ENCODE measurements at regions of chr19 and their contacts with region 1.

Region 1: DNA sequence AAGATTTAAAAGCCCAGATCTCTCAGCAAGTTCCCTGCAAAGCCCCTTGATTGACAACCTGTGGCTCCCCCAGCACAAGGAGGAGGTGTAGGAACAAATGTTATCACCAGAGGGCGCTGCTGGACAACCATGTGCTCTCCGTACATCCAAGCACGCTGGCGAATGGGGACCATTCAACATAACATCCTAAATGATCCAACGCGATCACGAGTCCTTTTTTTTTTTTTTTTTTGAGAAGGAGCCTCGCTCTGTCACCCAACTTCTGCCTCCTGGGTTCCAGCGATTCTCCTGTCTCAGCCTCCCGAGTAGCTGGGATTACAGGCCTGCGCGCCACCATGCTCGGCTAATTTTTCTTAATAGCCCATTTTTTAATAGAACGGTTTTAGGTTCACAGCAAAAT is 52.0 kb downstream of the NWD1 start:
- DNase-seq: peak; percentile 48
- ATAC-seq: peak; percentile 75
- H3K4me3 Mint-ChIP-seq: no peak overlapping the region
- H3K27ac Mint-ChIP-seq: no peak overlapping the region
- H3K4me1 Mint-ChIP-seq: peaks cover 1% of the 10 kb centered on the region
- H3K27me3 Mint-ChIP-seq: peaks cover 3% of the 10 kb centered on the region
- CTCF ChIP-seq: no peak

Region 2: DNA sequence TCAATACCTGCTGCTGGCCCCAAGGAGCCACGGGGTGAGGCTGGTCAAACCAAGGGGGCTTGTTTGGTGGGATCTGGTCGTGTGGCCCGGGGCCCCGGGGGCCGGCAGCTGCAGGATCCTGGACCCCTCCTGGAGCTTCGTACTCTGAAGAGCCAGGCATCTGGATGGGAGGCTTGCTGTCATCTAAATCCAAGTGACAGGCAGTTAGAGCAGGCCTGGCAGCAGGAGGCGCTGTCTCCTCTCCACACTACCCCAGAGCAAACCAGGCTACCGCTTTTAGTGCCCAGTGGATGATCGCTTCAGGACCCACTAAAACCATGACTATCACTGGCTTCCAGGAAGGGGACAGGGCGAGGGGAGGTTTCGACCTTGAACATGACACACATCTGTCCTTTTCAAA is 243.5 kb before region 1 on chr19:
- CTCF ChIA-PET with region 1: no interaction called
- POLR2A ChIA-PET with region 1: no interaction called
- intact Hi-C with region 1: loop called (anchors 1 kb)
- DNase-seq: no peak
- ATAC-seq: peak; percentile 67
- H3K4me3 Mint-ChIP-seq: no peak overlapping the region
- H3K27ac Mint-ChIP-seq: no peak overlapping the region
- H3K4me1 Mint-ChIP-seq: no peaks in the 10 kb centered on the region
- H3K27me3 Mint-ChIP-seq: no peaks in the 10 kb centered on the region
- CTCF ChIP-seq: no peak

Region 3: GRCh38 chr19:16688084-16688483 is 83.5 kb before region 1 on chr19:
- CTCF ChIA-PET with region 1: no interaction called
- POLR2A ChIA-PET with region 1: no interaction called
- intact Hi-C with region 1: no loop called
- DNase-seq: no peak
- ATAC-seq: no peak
- H3K4me3 Mint-ChIP-seq: no peak overlapping the region
- H3K27ac Mint-ChIP-seq: no peak overlapping the region
- H3K4me1 Mint-ChIP-seq: no peaks in the 10 kb centered on the region
- H3K27me3 Mint-ChIP-seq: no peaks in the 10 kb centered on the region
- CTCF ChIP-seq: no peak

Region 4: GRCh38 chr19:16714702-16715287 is 56.8 kb before region 1 on chr19:
- CTCF ChIA-PET with region 1: interaction called, 8 read pairs
- POLR2A ChIA-PET with region 1: no interaction called
- intact Hi-C with region 1: loop called (anchors 1 kb)
- DNase-seq: peak; percentile 47
- ATAC-seq: peak; percentile 20
- H3K4me3 Mint-ChIP-seq: peak overlapping the region; percentile 42
- H3K27ac Mint-ChIP-seq: peak overlapping the region; percentile 81
- H3K4me1 Mint-ChIP-seq: peaks cover 54% of the 10 kb centered on the region
- H3K27me3 Mint-ChIP-seq: no peaks in the 10 kb centered on the region
- CTCF ChIP-seq: peak; percentile 94

Region 5: GRCh38 chr19:16836115-16837034 is 64.8 kb after region 1 on chr19:
- CTCF ChIA-PET with region 1: no interaction called
- POLR2A ChIA-PET with region 1: no interaction called
- intact Hi-C with region 1: loop called (anchors 10 kb)
- DNase-seq: peak; percentile 29
- ATAC-seq: peak; percentile 81
- H3K4me3 Mint-ChIP-seq: no peak overlapping the region
- H3K27ac Mint-ChIP-seq: peak overlapping the region; percentile 80
- H3K4me1 Mint-ChIP-seq: peaks cover 42% of the 10 kb centered on the region
- H3K27me3 Mint-ChIP-seq: no peaks in the 10 kb centered on the region
- CTCF ChIP-seq: no peak

Region 6: GRCh38 chr19:17159466-17160393 is 388.1 kb after region 1 on chr19:
- CTCF ChIA-PET with region 1: no interaction called
- POLR2A ChIA-PET with region 1: no interaction called
- intact Hi-C with region 1: no loop called
- DNase-seq: no peak
- ATAC-seq: no peak
- H3K4me3 Mint-ChIP-seq: no peak overlapping the region
- H3K27ac Mint-ChIP-seq: peak overlapping the region; percentile 50
- H3K4me1 Mint-ChIP-seq: no peaks in the 10 kb centered on the region
- H3K27me3 Mint-ChIP-seq: no peaks in the 10 kb centered on the region
- CTCF ChIP-seq: no peak

Measured in activated B cell treated with CpG ODN at 0.5 μM for 24 hours (primary cell).